SK-N-SH (cell line): ENCODE measurements at regions of chr20 and their contacts with region 1.

Region 1: DNA sequence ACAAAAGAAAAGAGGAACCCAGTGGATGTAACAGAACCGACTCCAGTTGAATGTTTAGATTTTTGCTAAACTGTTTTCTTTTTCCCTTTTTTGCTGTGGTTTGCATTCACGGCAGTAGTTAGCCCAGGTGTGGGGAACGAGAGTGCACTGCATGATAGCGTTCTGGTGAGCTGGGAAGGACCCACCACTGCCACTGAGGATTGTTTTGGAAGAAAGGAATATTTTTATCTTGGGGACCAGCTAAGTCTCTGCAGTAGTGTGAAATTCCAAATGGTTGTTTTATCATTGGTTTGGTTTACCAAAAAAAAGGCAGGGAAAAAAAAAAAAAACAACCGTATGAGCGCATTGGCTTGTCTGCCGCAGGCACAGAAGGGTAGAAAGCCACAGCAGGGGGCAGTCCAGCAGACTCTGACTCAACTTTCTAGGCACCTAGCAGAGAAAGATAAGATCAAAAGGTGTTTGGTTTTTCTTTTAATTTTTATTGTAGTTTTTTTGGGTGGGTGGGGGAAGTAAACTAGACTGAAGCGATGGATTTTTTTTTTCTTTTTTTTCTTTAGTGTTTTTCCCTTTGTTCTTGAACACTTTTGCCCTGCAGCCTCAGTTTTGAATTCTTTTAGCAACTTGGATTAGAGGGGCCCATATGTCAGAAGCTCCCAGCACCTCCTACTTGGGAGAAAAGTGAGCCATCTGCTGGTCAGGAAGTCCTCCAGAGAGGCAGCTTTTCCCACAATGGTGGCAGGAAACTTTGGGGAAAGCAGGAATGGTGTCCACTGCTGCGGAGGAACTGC is 13.5 kb upstream of the RAB5IF start:
- DNase-seq: peak; percentile 46
- H3K4me3 ChIP-seq: no peak overlapping the region
- H3K27ac ChIP-seq: no peak overlapping the region
- H3K4me1 ChIP-seq: no peaks in the 10 kb centered on the region
- H3K27me3 ChIP-seq: no peaks in the 10 kb centered on the region
- CTCF ChIP-seq: peak; percentile 63
- EP300 ChIP-seq: no peak
- RAD21 ChIP-seq: peak; percentile 55

Region 2: GRCh38 chr20:36562724-36563123 is 29.3 kb before region 1 on chr20:
- CTCF ChIA-PET with region 1: interaction called, 10 read pairs
- POLR2A ChIA-PET with region 1: no interaction called
- DNase-seq: no peak
- H3K4me3 ChIP-seq: no peak overlapping the region
- H3K27ac ChIP-seq: no peak overlapping the region
- H3K4me1 ChIP-seq: no peaks in the 10 kb centered on the region
- H3K27me3 ChIP-seq: no peaks in the 10 kb centered on the region
- CTCF ChIP-seq: no peak
- EP300 ChIP-seq: no peak
- RAD21 ChIP-seq: no peak

Region 3: DNA sequence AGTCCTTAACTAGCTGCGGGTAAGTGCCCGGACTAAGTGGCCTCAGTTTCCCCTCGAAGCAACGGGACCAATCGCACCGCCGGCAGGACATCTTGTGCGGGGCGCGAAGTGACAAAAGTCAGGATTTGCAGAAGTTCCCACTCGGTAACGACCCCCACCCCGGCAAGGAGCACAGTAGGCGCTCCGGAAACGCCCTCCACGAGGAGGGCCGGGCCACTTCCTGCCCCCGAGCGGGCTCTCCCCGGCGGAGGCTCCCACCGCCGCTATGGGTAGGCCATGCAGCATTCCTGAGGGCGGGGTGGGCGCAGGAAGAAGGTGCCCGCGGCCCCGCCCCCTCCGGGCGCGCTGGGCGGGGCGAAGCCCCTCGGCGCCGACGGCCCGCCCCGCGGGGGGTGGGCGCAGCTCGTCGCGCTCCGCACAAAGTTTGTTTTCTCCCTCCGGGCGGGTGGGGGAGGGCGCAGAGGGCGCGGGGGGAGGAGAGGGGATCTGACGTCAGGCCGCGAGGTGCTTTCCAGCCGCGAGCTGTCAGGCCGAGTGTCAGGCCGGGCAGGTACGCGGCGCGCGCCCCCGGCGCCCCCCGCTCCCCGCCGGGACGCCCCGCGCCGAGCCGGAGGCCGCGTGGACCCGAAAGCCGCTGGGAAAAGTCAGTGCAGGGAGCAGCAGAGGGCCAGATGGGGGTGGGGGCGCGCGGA is 18.8 kb before region 1 on chr20 and contains the start of gene TGIF2:
- CTCF ChIA-PET with region 1: interaction called, 10 read pairs
- POLR2A ChIA-PET with region 1: no interaction called
- DNase-seq: peak; percentile 96
- H3K4me3 ChIP-seq: peak within 1 kb of the TSS; percentile 65 to 77
- H3K27ac ChIP-seq: peak within 1 kb of the TSS; percentile 55 to 78
- H3K4me1 ChIP-seq: peaks cover 17 to 20% of the 10 kb centered on the region in 2 experiments; a peak in 3 of 4 replicates
- H3K27me3 ChIP-seq: no peaks in the 10 kb centered on the region
- CTCF ChIP-seq: no peak
- EP300 ChIP-seq: no peak
- RAD21 ChIP-seq: no peak
- polyA plus RNA-seq, gene TGIF2: 10.3 and 10.8 TPM in 2 replicates